Ascending aorta (tissue), 2 donors: ENCODE measurements at regions of chr7 and their contacts with region 1.

Region 1: DNA sequence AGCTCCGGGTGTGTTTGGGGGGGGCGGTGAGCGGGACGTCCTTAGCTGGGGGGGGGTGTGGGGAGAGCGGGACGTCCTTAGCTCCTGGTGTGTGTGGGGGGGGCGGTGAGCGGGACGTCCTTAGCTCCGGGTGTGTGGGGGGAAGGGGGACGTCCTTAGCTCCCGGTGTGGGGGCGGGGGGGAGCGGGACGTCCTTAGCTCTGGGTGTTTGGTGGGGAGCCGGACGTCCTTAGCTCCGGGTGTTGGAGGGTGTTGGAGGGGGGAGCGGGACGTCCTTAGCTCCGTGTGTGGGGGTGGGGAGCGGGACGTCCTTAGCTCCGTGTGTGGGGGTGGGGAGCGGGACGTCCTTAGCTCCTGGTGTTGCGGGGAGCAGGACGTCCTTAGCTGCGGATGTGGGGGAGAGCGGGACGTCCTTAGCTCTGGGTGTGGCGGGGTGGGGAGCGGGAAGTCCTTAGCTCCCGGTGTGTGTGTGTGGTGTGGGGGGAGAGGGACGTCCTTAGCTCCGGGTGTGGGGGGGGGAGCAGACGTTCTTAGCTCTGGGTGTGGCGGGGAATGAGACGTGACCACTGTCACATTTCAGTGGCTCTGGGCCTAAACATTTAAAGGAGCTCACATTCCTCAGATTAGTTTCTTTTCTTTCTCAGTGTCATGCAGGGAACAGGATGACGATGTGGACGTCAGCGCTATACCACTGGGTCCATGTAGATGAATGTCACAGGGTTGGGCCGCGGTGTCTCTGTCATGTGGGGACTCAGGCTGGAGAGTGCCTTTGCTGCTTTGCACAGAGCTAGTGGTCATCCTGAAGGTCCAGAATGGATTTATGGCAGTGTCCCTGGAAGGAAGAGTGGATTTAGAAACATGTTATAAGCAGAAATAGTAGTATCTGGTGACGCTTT is 7.5 kb downstream of the DYNC2I1 start:
- DNase-seq: peak; percentile 23 to 84
- H3K4me3 ChIP-seq: peak overlapping the region; percentile 61 to 77
- H3K27ac ChIP-seq: peak overlapping the region; percentile 83
- H3K4me1 ChIP-seq: peaks cover 0 to 6% of the 10 kb centered on the region in 2 donors
- H3K27me3 ChIP-seq: no peaks in the 10 kb centered on the region
- CTCF ChIP-seq: no peak

Region 2: DNA sequence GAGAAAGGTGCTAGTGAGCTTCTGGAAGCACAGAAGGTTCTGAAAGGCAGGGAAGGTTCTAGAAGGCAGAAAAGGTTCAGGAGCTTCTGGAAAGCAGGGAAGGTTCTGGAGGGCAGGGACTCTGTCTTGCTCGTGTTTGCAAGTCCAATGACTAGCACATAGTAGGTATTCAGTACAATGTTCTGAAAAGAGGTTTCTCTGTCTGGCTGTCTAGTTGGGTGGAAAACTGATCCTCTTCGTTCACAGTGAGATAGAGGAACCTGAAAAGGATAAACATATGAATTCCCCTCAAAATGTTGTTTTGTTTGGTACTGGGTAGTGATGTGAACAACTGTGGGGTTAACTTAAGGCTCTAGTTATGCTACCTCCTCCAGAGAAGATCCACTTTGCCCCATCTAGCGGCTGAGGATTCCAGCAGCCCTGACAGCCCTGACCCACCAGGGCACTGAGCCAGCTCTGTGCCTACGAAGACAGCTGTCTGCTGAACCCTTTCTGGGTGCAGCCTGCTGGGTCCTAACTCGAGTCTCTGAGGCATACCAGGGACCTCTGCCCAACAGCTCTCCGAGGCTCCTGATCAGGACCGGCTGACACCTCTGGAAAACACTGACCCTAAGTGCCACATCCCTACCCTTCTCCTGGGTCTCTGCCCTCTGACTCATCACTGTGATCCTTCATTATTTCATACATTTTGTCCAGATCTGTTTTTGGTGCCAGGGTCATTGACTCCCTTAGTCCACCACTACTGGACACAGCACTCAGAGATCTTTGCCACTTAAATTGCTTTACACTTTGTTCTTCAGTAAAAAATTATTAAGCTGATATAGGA is 291.6 kb before region 1 on chr7:
- intact Hi-C with region 1: no loop called
- DNase-seq: no peak
- H3K4me3 ChIP-seq: no peak overlapping the region
- H3K27ac ChIP-seq: no peak overlapping the region
- H3K4me1 ChIP-seq: no peaks in the 10 kb centered on the region
- H3K27me3 ChIP-seq: peaks cover 5% of the 10 kb centered on the region
- CTCF ChIP-seq: no peak

Region 3: GRCh38 chr7:158945519-158945918 is 81.7 kb after region 1 on chr7:
- intact Hi-C with region 1: no loop called
- DNase-seq: no peak
- H3K4me3 ChIP-seq: no peak overlapping the region
- H3K27ac ChIP-seq: no peak overlapping the region
- H3K4me1 ChIP-seq: no peaks in the 10 kb centered on the region
- H3K27me3 ChIP-seq: no peaks in the 10 kb centered on the region
- CTCF ChIP-seq: no peak

Region 4: DNA sequence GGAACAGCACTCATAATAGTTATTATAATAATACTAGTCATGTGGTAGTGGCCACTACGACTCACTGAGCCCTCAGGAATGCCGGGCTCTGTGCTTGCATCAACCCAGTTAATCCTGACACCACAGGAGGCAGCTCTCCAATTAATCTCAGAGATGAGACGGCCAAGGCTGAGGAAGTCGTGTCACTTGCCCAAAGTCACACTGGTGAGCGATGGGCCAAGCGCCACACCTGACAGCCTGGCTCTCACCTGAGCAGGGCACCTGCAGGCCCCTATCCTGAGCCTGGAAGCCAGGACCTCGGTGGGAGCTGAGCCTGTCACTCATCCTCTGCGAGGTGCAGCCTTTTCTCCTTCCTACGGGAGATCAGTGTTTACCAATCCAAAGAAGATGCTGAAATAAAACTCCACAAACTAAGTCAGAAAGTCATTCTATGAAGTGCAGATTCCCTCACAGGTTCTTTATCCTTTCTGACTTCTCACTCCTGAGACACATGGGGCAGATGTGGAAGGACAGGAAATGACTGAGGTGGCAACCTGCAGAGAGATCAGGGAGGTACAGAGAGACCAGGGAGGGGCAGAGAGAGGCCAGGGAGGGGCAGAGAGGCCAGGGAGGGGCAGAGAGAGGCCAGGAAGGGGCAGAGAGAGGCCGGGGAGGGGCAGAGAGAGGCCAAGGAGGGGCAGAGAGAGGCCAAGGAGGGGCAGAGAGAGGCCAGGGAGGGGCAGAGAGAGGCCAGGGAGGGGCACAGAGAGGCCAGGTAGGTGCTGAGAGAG is 242.2 kb after region 1 on chr7:
- intact Hi-C with region 1: loop called (anchors 10 kb)
- DNase-seq: no peak
- H3K4me3 ChIP-seq: no peak overlapping the region
- H3K27ac ChIP-seq: peak overlapping the region; percentile 69 to 76
- H3K4me1 ChIP-seq: peaks cover 10 to 33% of the 10 kb centered on the region in 2 donors
- H3K27me3 ChIP-seq: no peaks in the 10 kb centered on the region
- CTCF ChIP-seq: no peak